Right ventricle myocardium inferior (tissue), 1 donor: ENCODE measurements at regions of chr1 and their contacts with region 1.

Region 1: GRCh38 chr1:81220614-81221071 is 580.1 kb upstream of the ADGRL2 start:
- DNase-seq: peak; percentile 53
- ATAC-seq: no peak

Region 2: GRCh38 chr1:81305997-81306452 is 85.4 kb after region 1 on chr1:
- intact Hi-C with region 1: loop called (anchors 5 kb)
- DNase-seq: no peak
- ATAC-seq: peak; percentile 84

Region 3: GRCh38 chr1:81358156-81358555 is 137.5 kb after region 1 on chr1:
- intact Hi-C with region 1: no loop called
- DNase-seq: no peak
- ATAC-seq: no peak

Region 4: GRCh38 chr1:81414488-81415015 is 193.9 kb after region 1 on chr1:
- intact Hi-C with region 1: loop called (anchors 5 kb)
- DNase-seq: peak; percentile 88
- ATAC-seq: peak; percentile 89

Region 5: GRCh38 chr1:81562934-81563333 is 342.3 kb after region 1 on chr1:
- intact Hi-C with region 1: no loop called
- DNase-seq: no peak
- ATAC-seq: no peak